A673 (cell line): ENCODE measurements at regions of chr12 and their contacts with region 1.

Region 1: DNA sequence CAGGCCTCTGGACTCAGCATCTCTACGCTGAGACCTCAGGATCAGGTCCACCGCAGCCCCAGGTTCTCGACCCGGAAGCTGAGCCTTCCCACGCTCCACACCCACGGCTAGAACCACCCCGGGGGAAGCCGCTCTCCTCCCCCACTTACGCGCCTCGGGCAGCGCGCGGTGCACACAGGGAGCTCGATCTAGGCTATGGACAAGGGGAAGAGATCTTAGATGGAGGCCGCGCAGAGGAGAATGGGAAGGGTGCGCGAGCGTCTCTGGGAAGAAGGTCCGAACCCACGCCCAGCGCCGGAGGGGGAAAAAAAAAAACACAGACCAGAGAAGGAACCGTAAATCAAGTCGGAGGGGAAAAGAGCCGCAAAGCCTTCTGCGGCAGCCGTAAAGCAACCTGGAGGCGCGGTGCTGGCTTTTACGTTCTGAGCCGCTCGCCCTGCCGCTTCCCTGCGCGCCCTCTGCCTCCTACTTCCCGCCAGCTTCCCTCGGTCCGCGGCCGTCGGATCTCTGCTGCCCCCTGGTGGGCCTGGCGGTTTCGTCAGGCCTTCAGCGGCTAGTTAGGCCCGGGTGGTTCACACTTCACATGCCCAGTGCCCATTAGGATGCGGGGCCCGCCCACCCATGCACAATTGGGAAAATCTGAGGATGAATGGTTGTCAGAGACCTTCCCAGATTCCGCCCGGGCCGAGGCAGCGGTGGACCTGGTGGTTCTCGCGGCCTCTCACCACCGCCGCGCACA is at the start of gene RAD52:
- DNase-seq: peak; percentile 99
- H3K4me3 ChIP-seq: peak within 1 kb of the TSS; percentile 72
- H3K27ac ChIP-seq: peak within 1 kb of the TSS; percentile 84
- H3K4me1 ChIP-seq: peaks cover 21% of the 10 kb centered on the region
- H3K27me3 ChIP-seq: no peaks in the 10 kb centered on the region
- CTCF ChIP-seq: peak; percentile 99
- total RNA-seq, gene RAD52: 23.0 and 24.7 TPM in 2 replicates

Region 2: DNA sequence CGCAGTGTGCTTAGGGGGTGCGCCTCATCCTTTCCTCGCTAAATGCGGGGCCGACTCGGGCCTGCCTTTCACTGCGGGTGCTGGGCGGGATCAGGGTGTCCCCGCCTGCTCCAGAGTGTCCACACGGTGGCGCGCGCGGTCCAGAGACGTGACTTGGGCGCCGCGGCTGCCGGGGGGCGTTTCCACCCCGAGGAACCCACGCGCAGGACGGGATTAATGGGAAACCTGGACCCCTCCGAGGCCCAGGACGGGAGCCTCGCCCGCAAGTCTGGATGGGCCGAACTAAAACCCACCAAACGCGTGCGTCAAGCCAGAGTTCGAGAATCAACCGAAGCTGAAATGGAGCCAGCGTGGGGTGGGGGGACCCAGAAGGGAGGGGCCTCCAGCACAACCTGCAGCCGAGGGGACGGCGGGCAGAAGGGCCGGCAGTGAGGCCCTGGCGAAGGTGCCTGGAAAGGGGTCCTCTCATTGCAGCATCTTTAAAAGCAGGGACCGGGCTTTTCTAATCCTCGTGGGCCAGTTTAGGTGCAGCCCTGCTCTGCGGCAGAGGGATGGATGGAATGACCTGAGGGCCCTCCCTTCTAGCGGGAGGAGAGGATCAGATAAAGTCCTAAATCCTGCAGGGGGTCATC is 379.7 kb before region 1 on chr12:
- CTCF ChIA-PET with region 1: no interaction called
- POLR2A ChIA-PET with region 1: no interaction called
- intact Hi-C with region 1: loop called (anchors 5 kb)
- DNase-seq: peak; percentile 90
- H3K4me3 ChIP-seq: peak overlapping the region; percentile 55
- H3K27ac ChIP-seq: no peak overlapping the region
- H3K4me1 ChIP-seq: no peaks in the 10 kb centered on the region
- H3K27me3 ChIP-seq: no peaks in the 10 kb centered on the region
- CTCF ChIP-seq: peak; percentile 99

Region 3: GRCh38 chr12:818733-819132 is 130.9 kb before region 1 on chr12:
- CTCF ChIA-PET with region 1: interaction called, 3 read pairs
- POLR2A ChIA-PET with region 1: no interaction called
- intact Hi-C with region 1: loop called (anchors 5 kb)
- DNase-seq: no peak
- H3K4me3 ChIP-seq: no peak overlapping the region
- H3K27ac ChIP-seq: peak overlapping the region; percentile 15
- H3K4me1 ChIP-seq: peaks cover 18% of the 10 kb centered on the region
- H3K27me3 ChIP-seq: no peaks in the 10 kb centered on the region
- CTCF ChIP-seq: 0 out of 2 replicates have a peak, but pooled peaks have one; percentile 8

Region 4: GRCh38 chr12:1093166-1093751 is 143.6 kb after region 1 on chr12:
- CTCF ChIA-PET with region 1: interaction called, 10 read pairs
- POLR2A ChIA-PET with region 1: no interaction called
- intact Hi-C with region 1: loop called (anchors 5 kb)
- DNase-seq: peak; percentile 79
- H3K4me3 ChIP-seq: no peak overlapping the region
- H3K27ac ChIP-seq: no peak overlapping the region
- H3K4me1 ChIP-seq: no peaks in the 10 kb centered on the region
- H3K27me3 ChIP-seq: no peaks in the 10 kb centered on the region
- CTCF ChIP-seq: peak; percentile 84